Heart right ventricle (tissue), 16 donors: ENCODE measurements at regions of chr20 and their contacts with region 1.

Region 1: GRCh38 chr20:32681175-32682084 is 7.7 kb upstream of the C20orf203 start:
- DNase-seq: no peak
- ATAC-seq: no peak
- H3K4me3 ChIP-seq: no peak overlapping the region
- H3K27ac ChIP-seq: peak overlapping the region in 4 of 10 donors; percentile 31 to 48 (median 38)
- H3K4me1 ChIP-seq: peaks cover 0 to 31% (median 0%) of the 10 kb centered on the region in 9 donors
- H3K27me3 ChIP-seq: no peaks in the 10 kb centered on the region
- CTCF ChIP-seq: no peak

Region 2: DNA sequence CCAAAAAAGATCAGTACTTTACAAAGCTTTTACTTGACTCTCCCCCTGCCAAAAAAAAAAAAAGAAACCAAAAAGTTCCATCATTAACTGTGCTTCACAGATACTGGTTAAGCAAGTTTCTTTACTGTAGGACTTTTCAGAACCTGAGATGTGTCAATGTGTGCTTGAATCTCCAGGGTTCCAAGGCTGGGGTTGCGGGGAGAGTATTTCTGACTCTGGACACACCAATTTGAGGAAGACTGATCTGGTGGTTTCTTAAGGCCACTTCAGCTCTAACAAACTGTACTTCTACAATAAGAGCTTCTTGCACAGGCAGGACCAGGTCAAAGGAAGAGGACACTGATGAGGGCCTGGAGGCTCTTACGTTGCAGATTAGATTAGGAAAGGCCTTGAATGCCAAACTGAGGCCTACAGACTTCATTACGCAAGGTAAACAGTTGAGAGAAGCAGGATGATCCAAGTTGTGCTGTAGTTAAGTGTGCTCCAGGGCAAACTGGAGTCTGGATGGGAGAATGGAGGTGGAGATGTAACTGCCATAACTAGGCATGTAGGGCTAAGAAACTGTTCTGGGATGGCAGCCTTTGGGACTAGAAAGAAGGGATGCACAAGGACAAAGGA is 37.4 kb after region 1 on chr20:
- intact Hi-C with region 1: no loop called
- DNase-seq: no peak
- ATAC-seq: no peak
- H3K4me3 ChIP-seq: no peak overlapping the region
- H3K27ac ChIP-seq: no peak overlapping the region
- H3K4me1 ChIP-seq: peaks cover 0 to 7% (median 0%) of the 10 kb centered on the region in 9 donors
- H3K27me3 ChIP-seq: no peaks in the 10 kb centered on the region
- CTCF ChIP-seq: no peak

Region 3: DNA sequence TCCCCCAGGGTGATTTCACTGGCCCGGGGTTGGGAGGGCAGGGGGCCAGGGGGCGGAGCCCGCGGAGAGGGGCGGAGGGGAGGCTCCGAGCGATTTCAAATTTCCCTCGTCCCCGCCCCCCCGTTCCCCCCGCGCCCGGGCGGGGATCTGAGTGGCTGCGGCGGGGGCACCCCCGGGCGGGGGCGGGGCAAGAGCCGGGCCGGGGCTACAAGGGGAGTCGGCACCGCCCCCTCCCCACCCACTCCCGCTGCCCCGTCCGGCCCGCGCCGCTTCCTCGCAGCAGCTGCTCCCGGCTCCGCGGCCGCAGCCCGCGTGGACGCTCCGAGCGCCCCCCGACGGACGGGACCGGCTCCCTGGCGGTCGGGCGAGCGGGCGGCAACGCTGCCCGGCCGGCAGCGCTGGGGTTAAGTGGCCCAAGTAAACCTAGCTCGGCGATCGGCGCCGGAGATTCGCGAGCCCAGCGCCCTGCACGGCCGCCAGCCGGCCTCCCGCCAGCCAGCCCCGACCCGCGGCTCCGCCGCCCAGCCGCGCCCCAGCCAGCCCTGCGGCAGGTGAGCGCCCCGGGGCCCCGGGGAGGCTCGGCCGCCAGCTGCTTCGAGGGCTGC is 80.8 kb after region 1 on chr20 and contains the start of gene DNMT3B:
- intact Hi-C with region 1: loop called in 3 of 10 experiments (anchors 5 kb)
- DNase-seq: peak; percentile 82 to 85
- ATAC-seq: peak; percentile 83 to 94 (median 92)
- H3K4me3 ChIP-seq: peak within 1 kb of the TSS; percentile 56 to 99 (median 81)
- H3K27ac ChIP-seq: peak within 1 kb of the TSS in 6 of 10 donors; percentile 23 to 69 (median 39)
- H3K4me1 ChIP-seq: peaks cover 5 to 26% (median 20%) of the 10 kb centered on the region in 9 donors
- H3K27me3 ChIP-seq: peaks cover 0 to 10% (median 0%) of the 10 kb centered on the region in 7 donors
- CTCF ChIP-seq: peak in 5 of 9 donors; percentile 20 to 54 (median 30)
- total RNA-seq, gene DNMT3B: 0.27 to 0.95 (median 0.68) TPM

Region 4: GRCh38 chr20:32779500-32780211 is 98.2 kb after region 1 on chr20:
- intact Hi-C with region 1: loop called in 3 of 10 experiments (anchors 5 kb)
- DNase-seq: no peak
- ATAC-seq: no peak
- H3K4me3 ChIP-seq: no peak overlapping the region
- H3K27ac ChIP-seq: no peak overlapping the region
- H3K4me1 ChIP-seq: peaks cover 0 to 17% (median 4%) of the 10 kb centered on the region in 9 donors
- H3K27me3 ChIP-seq: no peaks in the 10 kb centered on the region
- CTCF ChIP-seq: no peak